IMR-90 (cell line): ENCODE measurements at regions of chr6 and their contacts with region 1.

Region 1: DNA sequence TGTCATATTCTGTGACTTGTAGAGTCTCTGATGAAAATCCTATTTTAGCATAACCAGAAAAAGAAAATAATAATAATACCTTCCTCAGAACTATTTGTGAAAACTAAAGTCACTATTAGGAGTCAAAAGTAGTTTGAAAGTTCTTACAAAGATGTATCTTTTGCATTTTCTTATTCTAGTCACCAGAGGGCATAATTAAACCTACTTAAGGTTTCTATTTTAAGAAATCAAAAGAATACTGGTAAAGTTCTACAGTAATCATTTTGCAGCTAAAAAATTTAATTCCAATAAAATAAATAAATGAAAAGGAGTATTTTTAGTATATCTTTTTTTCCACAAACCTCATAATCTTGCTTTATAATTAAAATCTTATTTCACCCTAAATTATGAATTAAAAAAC is 28.0 kb upstream of the MCM9 start:
- DNase-seq: peak; percentile 10
- ATAC-seq: no peak
- H3K4me3 ChIP-seq: no peak overlapping the region
- H3K27ac ChIP-seq: no peak overlapping the region
- H3K4me1 ChIP-seq: no peaks in the 10 kb centered on the region
- H3K27me3 ChIP-seq: peaks cover 2% of the 10 kb centered on the region; the same call in 1 of the 2 replicates
- CTCF ChIP-seq: peak; percentile 33
- POLR2A ChIP-seq: no peak
- RAD21 ChIP-seq: no peak; the same call in 1 of the 2 replicates

Region 2: GRCh38 chr6:118974790-118975189 is 11.8 kb after region 1 on chr6:
- CTCF ChIA-PET with region 1: interaction called, 11 read pairs
- POLR2A ChIA-PET with region 1: no interaction called
- dilution Hi-C with region 1: no loop called
- in situ Hi-C with region 1: no loop called
- intact Hi-C with region 1: no loop called
- DNase-seq: no peak
- ATAC-seq: no peak
- H3K4me3 ChIP-seq: no peak overlapping the region
- H3K27ac ChIP-seq: no peak overlapping the region
- H3K4me1 ChIP-seq: no peaks in the 10 kb centered on the region
- H3K27me3 ChIP-seq: no peaks in the 10 kb centered on the region
- CTCF ChIP-seq: no peak
- POLR2A ChIP-seq: no peak
- RAD21 ChIP-seq: no peak

Region 3: GRCh38 chr6:119012521-119012920 is 49.5 kb after region 1 on chr6:
- CTCF ChIA-PET with region 1: no interaction called
- POLR2A ChIA-PET with region 1: no interaction called
- dilution Hi-C with region 1: no loop called
- in situ Hi-C with region 1: no loop called
- intact Hi-C with region 1: no loop called
- DNase-seq: no peak
- ATAC-seq: no peak
- H3K4me3 ChIP-seq: no peak overlapping the region
- H3K27ac ChIP-seq: no peak overlapping the region
- H3K4me1 ChIP-seq: no peaks in the 10 kb centered on the region
- H3K27me3 ChIP-seq: no peaks in the 10 kb centered on the region; the same call in 1 of the 2 replicates
- CTCF ChIP-seq: no peak
- POLR2A ChIP-seq: no peak
- RAD21 ChIP-seq: no peak

Region 4: GRCh38 chr6:119110601-119111548 is 147.9 kb after region 1 on chr6:
- CTCF ChIA-PET with region 1: interaction called, 13 read pairs
- POLR2A ChIA-PET with region 1: no interaction called
- dilution Hi-C with region 1: no loop called
- in situ Hi-C with region 1: loop called (anchors 5 kb)
- intact Hi-C with region 1: loop called (anchors 1 kb)
- DNase-seq: peak; percentile 56
- ATAC-seq: peak; percentile 85
- H3K4me3 ChIP-seq: no peak overlapping the region
- H3K27ac ChIP-seq: no peak overlapping the region
- H3K4me1 ChIP-seq: no peaks in the 10 kb centered on the region
- H3K27me3 ChIP-seq: peaks cover 5% of the 10 kb centered on the region; the same call in 1 of the 2 replicates
- CTCF ChIP-seq: peak; percentile 64
- POLR2A ChIP-seq: no peak
- RAD21 ChIP-seq: peak; percentile 71

Region 5: DNA sequence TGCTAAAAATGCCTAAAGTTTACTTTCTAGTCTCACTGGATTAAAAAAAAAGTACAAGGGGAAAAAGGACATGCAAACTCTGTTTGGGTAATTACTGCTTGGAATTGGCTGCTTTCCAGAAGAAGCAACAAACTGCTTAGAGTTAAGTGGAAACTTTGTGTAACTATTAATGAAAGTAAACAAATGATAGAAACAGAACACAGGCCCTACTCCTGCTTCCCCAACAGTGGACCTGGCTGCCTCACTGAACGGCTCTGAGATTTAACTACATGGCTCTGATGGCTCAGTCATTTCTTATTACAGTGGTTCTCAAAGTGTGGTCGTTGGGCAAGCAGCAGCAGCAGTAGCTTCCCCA is 278.1 kb after region 1 on chr6:
- CTCF ChIA-PET with region 1: no interaction called
- POLR2A ChIA-PET with region 1: no interaction called
- dilution Hi-C with region 1: no loop called
- in situ Hi-C with region 1: no loop called
- intact Hi-C with region 1: no loop called
- DNase-seq: peak; percentile 59
- ATAC-seq: peak; percentile 81
- H3K4me3 ChIP-seq: no peak overlapping the region
- H3K27ac ChIP-seq: peak overlapping the region; percentile 2; the same call in 1 of the 2 replicates
- H3K4me1 ChIP-seq: peaks cover 4% of the 10 kb centered on the region; the same call in 1 of the 2 replicates
- H3K27me3 ChIP-seq: no peaks in the 10 kb centered on the region
- CTCF ChIP-seq: no peak
- POLR2A ChIP-seq: no peak
- RAD21 ChIP-seq: no peak